Naive thymus-derived CD4-positive, alpha-beta T cell (primary cell): ENCODE measurements at regions of chr6 and their contacts with region 1.

Region 1: GRCh38 chr6:31114970-31115849 is 610 bp downstream of the PSORS1C1 start:
- DNase-seq: peak in 3 of 9 donors; percentile 23 to 45 (median 23)
- ATAC-seq: no peak
- H3K4me3 ChIP-seq: no peak overlapping the region
- H3K4me3 Mint-ChIP-seq: peak overlapping the region in 2 of 10 donors; percentile 28 to 46
- H3K27ac ChIP-seq: no peak overlapping the region
- H3K27ac Mint-ChIP-seq: peak overlapping the region in 2 of 9 donors; percentile 32 to 76
- H3K4me1 ChIP-seq: no peaks in the 10 kb centered on the region
- H3K4me1 Mint-ChIP-seq: peaks cover 0 to 12% (median 5%) of the 10 kb centered on the region in 7 donors
- H3K27me3 ChIP-seq: no peaks in the 10 kb centered on the region
- H3K27me3 Mint-ChIP-seq: peaks cover 0 to 24% (median 9%) of the 10 kb centered on the region in 5 donors

Region 2: DNA sequence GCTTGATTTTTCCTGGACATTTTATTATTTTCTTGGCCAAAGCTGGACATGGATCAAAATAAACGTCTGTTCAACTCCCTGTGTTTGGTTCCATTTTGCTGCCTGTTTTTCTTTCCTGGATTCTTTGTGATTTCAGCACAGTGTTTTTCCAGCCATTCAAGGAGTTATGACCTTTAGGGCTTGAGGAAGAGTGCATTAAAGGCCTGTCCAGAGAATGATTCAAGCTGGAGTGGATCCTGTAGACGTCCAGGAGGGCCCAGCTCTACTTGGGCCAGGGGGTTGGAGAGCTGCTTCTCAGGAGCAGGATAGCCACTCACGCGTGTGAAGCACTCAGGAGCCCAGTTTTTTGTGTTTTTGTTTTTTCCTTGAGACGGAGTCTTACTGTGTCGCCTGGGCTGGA is 314.3 kb before region 1 on chr6:
- CTCF ChIA-PET with region 1: no interaction called
- POLR2A ChIA-PET with region 1: no interaction called
- intact Hi-C with region 1: no loop called
- DNase-seq: no peak
- ATAC-seq: no peak
- H3K4me3 ChIP-seq: no peak overlapping the region
- H3K4me3 Mint-ChIP-seq: no peak overlapping the region
- H3K27ac ChIP-seq: no peak overlapping the region
- H3K27ac Mint-ChIP-seq: peak overlapping the region in 1 of 9 donors; percentile 32
- H3K4me1 ChIP-seq: peaks cover 0 to 7% of the 10 kb centered on the region in 2 donors
- H3K4me1 Mint-ChIP-seq: peaks cover 11 to 43% (median 33%) of the 10 kb centered on the region in 7 donors
- H3K27me3 ChIP-seq: no peaks in the 10 kb centered on the region
- H3K27me3 Mint-ChIP-seq: no peaks in the 10 kb centered on the region

Region 3: GRCh38 chr6:31058128-31058894 is 56.9 kb before region 1 on chr6:
- CTCF ChIA-PET with region 1: interaction called, 5 read pairs
- POLR2A ChIA-PET with region 1: no interaction called
- intact Hi-C with region 1: loop called in 1 of 2 experiments (anchors 1 kb)
- DNase-seq: peak in 1 of 9 donors; percentile 1
- ATAC-seq: no peak
- H3K4me3 ChIP-seq: no peak overlapping the region
- H3K4me3 Mint-ChIP-seq: no peak overlapping the region
- H3K27ac ChIP-seq: no peak overlapping the region
- H3K27ac Mint-ChIP-seq: no peak overlapping the region
- H3K4me1 ChIP-seq: no peaks in the 10 kb centered on the region
- H3K4me1 Mint-ChIP-seq: no peaks in the 10 kb centered on the region
- H3K27me3 ChIP-seq: peaks cover 3 to 4% of the 10 kb centered on the region in 2 donors
- H3K27me3 Mint-ChIP-seq: peaks cover 10 to 38% (median 15%) of the 10 kb centered on the region in 5 donors

Region 4: GRCh38 chr6:31210123-31210522 is 94.9 kb after region 1 on chr6:
- CTCF ChIA-PET with region 1: no interaction called
- POLR2A ChIA-PET with region 1: no interaction called
- intact Hi-C with region 1: no loop called
- DNase-seq: no peak
- ATAC-seq: no peak
- H3K4me3 ChIP-seq: no peak overlapping the region
- H3K4me3 Mint-ChIP-seq: no peak overlapping the region
- H3K27ac ChIP-seq: no peak overlapping the region
- H3K27ac Mint-ChIP-seq: peak overlapping the region in 2 of 9 donors; percentile 13 to 66
- H3K4me1 ChIP-seq: no peaks in the 10 kb centered on the region
- H3K4me1 Mint-ChIP-seq: peaks cover 5 to 13% (median 8%) of the 10 kb centered on the region in 7 donors
- H3K27me3 ChIP-seq: no peaks in the 10 kb centered on the region
- H3K27me3 Mint-ChIP-seq: no peaks in the 10 kb centered on the region

Region 5: DNA sequence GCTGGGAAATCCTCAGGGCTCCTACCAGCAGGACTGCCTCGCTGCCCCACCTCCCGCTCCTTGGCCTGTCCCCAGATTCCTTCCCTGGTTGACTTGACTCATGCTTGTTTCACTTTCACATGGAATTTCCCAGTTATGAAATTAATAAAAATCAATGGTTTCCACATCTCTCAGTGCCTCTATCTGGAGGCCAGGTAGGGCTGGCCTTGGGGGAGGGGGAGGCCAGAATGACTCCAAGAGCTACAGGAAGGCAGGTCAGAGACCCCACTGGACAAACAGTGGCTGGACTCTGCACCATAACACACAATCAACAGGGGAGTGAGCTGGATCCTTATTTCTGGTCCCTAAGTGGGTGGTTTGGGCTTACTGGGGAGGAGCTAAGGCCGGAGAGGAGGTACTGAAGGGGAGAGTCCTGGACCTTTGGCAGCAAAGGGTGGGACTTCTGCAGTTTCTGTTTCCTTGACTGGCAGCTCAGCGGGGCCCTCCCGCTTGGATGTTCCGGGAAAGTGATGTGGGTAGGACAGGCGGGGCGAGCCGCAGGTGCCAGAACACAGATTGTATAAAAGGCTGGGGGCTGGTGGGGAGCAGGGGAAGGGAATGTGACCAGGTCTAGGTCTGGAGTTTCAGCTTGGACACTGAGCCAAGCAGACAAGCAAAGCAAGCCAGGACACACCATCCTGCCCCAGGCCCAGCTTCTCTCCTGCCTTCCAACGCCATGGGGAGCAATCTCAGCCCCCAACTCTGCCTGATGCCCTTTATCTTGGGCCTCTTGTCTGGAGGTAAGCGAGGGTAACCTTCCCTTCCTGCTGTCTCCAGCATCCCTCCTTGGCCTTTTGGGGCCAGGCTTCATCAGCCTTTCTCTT is 830.5 kb after region 1 on chr6 and contains the start of gene CFB:
- CTCF ChIA-PET with region 1: no interaction called
- POLR2A ChIA-PET with region 1: no interaction called
- intact Hi-C with region 1: no loop called
- DNase-seq: no peak
- ATAC-seq: no peak
- H3K4me3 ChIP-seq: no peak within 1 kb of the TSS
- H3K4me3 Mint-ChIP-seq: no peak within 1 kb of the TSS
- H3K27ac ChIP-seq: no peak within 1 kb of the TSS
- H3K27ac Mint-ChIP-seq: peak within 1 kb of the TSS in 3 of 9 donors; percentile 13 to 54 (median 36)
- H3K4me1 ChIP-seq: no peaks in the 10 kb centered on the region
- H3K4me1 Mint-ChIP-seq: peaks cover 0 to 8% (median 0%) of the 10 kb centered on the region in 7 donors
- H3K27me3 ChIP-seq: no peaks in the 10 kb centered on the region
- H3K27me3 Mint-ChIP-seq: peaks cover 0 to 14% (median 7%) of the 10 kb centered on the region in 5 donors
- total RNA-seq, gene CFB: 0.56 to 1.4 (median 1.1) TPM in 3 of 5 experiments, not detected in the others